ENCODE measurements at regions of chr4 and their contacts with region 1.

Region 1: GRCh38 chr4:145557720-145558119 is 61.5 kb upstream of the MMAA start:
- DNase-seq: peak; percentile 32 to 66
- ATAC-seq: peak; percentile 84 to 94 (median 88)
- H3K4me3 ChIP-seq: no peak overlapping the region
- H3K4me3 Mint-ChIP-seq: no peak overlapping the region
- H3K27ac ChIP-seq: no peak overlapping the region
- H3K27ac Mint-ChIP-seq: no peak overlapping the region
- H3K4me1 ChIP-seq: no peaks in the 10 kb centered on the region
- H3K4me1 Mint-ChIP-seq: peaks cover 1 to 2% of the 10 kb centered on the region in 2 donors
- H3K27me3 ChIP-seq: no peaks in the 10 kb centered on the region
- H3K27me3 Mint-ChIP-seq: no peaks in the 10 kb centered on the region
- CTCF ChIP-seq: peak; percentile 83

Region 2: DNA sequence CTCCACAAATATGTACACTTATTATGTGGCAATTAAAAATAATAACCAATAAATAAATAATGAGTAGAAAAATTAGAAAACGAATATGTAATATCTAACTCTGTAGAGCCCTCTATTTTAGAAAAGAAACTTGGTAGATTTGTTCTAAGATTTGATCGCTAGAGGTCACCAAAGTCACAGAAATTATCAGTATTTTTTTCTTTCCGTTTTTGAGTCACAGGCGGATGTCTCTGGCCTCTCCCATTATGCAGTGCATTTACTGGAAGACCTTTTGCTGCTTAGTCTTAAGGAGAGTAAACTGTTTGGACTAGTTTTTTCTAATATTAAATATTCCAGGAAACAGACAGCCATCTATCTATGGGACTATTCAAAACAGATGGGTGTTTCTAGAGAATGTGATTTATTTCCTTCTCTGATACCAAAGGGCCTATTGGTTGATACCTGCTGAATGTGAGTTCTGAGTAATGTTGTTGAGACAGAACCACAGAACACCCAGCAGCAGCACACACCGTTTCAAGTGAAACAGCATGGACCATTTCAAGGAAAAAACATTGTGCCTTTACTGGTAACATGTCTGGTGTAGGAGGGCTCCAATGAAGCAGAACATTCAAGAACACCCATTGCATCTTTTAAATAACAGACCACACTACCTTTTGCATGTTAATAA is 1383.2 kb before region 1 on chr4:
- intact Hi-C with region 1: loop called (anchors 5 kb)
- DNase-seq: peak in 1 of 2 donors; percentile 67
- ATAC-seq: peak in 2 of 3 donors; percentile 59 to 60
- H3K4me3 ChIP-seq: no peak overlapping the region
- H3K4me3 Mint-ChIP-seq: no peak overlapping the region
- H3K27ac ChIP-seq: no peak overlapping the region
- H3K27ac Mint-ChIP-seq: no peak overlapping the region
- H3K4me1 ChIP-seq: no peaks in the 10 kb centered on the region
- H3K4me1 Mint-ChIP-seq: no peaks in the 10 kb centered on the region
- H3K27me3 ChIP-seq: no peaks in the 10 kb centered on the region
- H3K27me3 Mint-ChIP-seq: peaks cover 5% of the 10 kb centered on the region in 2 donors
- CTCF ChIP-seq: peak; percentile 51

Region 3: DNA sequence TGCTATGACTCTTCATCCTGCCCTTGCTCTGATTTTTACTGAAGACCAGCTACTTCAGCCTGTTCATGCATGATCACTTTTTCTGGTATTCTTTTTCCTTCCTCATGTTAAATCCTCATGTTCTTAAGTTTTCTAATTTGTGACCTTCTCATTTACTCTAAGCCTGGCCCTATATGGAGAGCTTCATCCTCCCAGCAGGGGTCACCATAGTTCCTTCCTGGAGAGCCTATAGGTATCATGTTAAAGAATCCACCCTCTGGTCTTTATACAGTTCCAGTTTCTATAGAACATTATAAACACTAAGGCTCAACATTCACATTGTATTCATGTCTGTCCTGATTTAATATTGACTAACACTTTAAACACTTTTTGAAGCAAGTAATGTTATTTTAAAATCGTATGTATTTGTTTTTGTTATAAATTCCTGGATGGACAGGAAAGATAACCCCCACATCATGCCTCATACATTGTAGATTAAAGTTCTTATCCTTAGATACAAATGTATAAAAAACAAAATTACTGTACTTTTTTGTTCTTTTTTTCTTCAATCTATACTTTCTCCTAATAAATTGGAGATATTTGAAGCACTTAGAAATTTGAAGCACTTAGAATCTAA is 323.5 kb before region 1 on chr4:
- intact Hi-C with region 1: loop called (anchors 1 kb)
- DNase-seq: peak in 1 of 2 donors; percentile 76
- ATAC-seq: peak; percentile 77 to 92 (median 88)
- H3K4me3 ChIP-seq: no peak overlapping the region
- H3K4me3 Mint-ChIP-seq: no peak overlapping the region
- H3K27ac ChIP-seq: no peak overlapping the region
- H3K27ac Mint-ChIP-seq: no peak overlapping the region
- H3K4me1 ChIP-seq: no peaks in the 10 kb centered on the region
- H3K4me1 Mint-ChIP-seq: no peaks in the 10 kb centered on the region
- H3K27me3 ChIP-seq: no peaks in the 10 kb centered on the region
- H3K27me3 Mint-ChIP-seq: peaks cover 2 to 5% of the 10 kb centered on the region in 2 donors
- CTCF ChIP-seq: peak; percentile 67

Region 4: GRCh38 chr4:145420595-145421214 is 137.0 kb before region 1 on chr4:
- intact Hi-C with region 1: no loop called
- DNase-seq: no peak
- ATAC-seq: no peak
- H3K4me3 ChIP-seq: no peak overlapping the region
- H3K4me3 Mint-ChIP-seq: no peak overlapping the region
- H3K27ac ChIP-seq: no peak overlapping the region
- H3K27ac Mint-ChIP-seq: no peak overlapping the region
- H3K4me1 ChIP-seq: no peaks in the 10 kb centered on the region
- H3K4me1 Mint-ChIP-seq: no peaks in the 10 kb centered on the region
- H3K27me3 ChIP-seq: no peaks in the 10 kb centered on the region
- H3K27me3 Mint-ChIP-seq: peaks cover 11 to 15% of the 10 kb centered on the region in 2 donors
- CTCF ChIP-seq: no peak

Region 5: DNA sequence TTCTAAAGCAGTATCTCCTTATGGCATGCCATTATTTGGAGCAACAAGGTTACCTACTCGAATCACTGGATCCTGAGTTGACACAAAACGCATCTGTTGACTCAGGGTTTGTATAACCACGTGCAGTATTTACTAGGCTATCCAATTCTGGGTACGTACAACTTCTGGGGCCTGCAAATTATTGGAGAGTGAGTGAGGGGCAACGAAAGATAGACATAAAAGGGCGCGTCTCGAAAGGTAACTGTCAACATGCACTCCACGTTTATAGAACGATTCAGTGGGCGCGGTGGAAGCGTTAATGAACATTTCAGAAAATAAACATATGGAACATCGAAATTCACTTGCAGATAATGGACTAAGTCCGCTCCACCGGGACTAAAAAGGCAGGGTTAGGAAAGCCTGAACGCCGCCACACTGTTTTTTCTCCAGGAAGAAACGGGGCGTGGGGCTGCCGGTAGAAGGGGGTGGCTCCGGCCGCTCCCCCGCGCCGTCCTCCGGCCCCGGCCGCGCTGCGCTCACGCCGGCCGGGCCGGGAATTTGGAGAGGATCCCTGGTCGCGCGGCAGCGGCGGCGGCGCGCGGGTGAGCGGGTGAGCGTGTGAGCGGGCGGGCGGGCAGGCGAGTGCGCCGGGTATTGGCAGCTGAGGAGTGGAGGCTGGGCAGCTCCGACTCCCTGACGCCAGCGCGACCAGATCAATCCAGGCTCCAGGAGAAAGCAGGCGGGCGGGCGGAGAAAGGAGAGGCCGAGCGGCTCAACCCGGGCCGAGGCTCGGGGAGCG is 76.4 kb before region 1 on chr4 and contains the start of gene SMAD1:
- intact Hi-C with region 1: loop called (anchors 5 kb)
- DNase-seq: peak; percentile 25 to 36
- ATAC-seq: peak; percentile 73 to 75 (median 73)
- H3K4me3 ChIP-seq: peak within 1 kb of the TSS; percentile 30
- H3K4me3 Mint-ChIP-seq: peak within 1 kb of the TSS; percentile 88
- H3K27ac ChIP-seq: no peak within 1 kb of the TSS
- H3K27ac Mint-ChIP-seq: no peak within 1 kb of the TSS
- H3K4me1 ChIP-seq: no peaks in the 10 kb centered on the region
- H3K4me1 Mint-ChIP-seq: peaks cover 9 to 12% of the 10 kb centered on the region in 2 donors
- H3K27me3 ChIP-seq: no peaks in the 10 kb centered on the region
- H3K27me3 Mint-ChIP-seq: peaks cover 20 to 27% of the 10 kb centered on the region in 2 donors
- CTCF ChIP-seq: no peak
- total RNA-seq, gene SMAD1: 2.2 to 12.8 (median 9.9) TPM